A673 (cell line): ENCODE measurements at regions of chr3 and their contacts with region 1.

Region 1: GRCh38 chr3:171772427-171773056 is 37.7 kb downstream of the PLD1 start:
- DNase-seq: peak; percentile 80
- H3K4me3 ChIP-seq: no peak overlapping the region
- H3K27ac ChIP-seq: no peak overlapping the region
- H3K4me1 ChIP-seq: peaks cover 23% of the 10 kb centered on the region
- H3K27me3 ChIP-seq: no peaks in the 10 kb centered on the region
- CTCF ChIP-seq: peak; percentile 80

Region 2: GRCh38 chr3:171187706-171188290 is 584.7 kb before region 1 on chr3:
- CTCF ChIA-PET with region 1: no interaction called
- POLR2A ChIA-PET with region 1: no interaction called
- intact Hi-C with region 1: loop called (anchors 5 kb)
- DNase-seq: peak; percentile 50
- H3K4me3 ChIP-seq: no peak overlapping the region
- H3K27ac ChIP-seq: no peak overlapping the region
- H3K4me1 ChIP-seq: no peaks in the 10 kb centered on the region
- H3K27me3 ChIP-seq: no peaks in the 10 kb centered on the region
- CTCF ChIP-seq: peak; percentile 69

Region 3: GRCh38 chr3:171347301-171348039 is 425.1 kb before region 1 on chr3:
- CTCF ChIA-PET with region 1: no interaction called
- POLR2A ChIA-PET with region 1: no interaction called
- intact Hi-C with region 1: no loop called
- DNase-seq: peak; percentile 68
- H3K4me3 ChIP-seq: no peak overlapping the region
- H3K27ac ChIP-seq: peak overlapping the region; percentile 82
- H3K4me1 ChIP-seq: peaks cover 32% of the 10 kb centered on the region
- H3K27me3 ChIP-seq: no peaks in the 10 kb centered on the region
- CTCF ChIP-seq: no peak

Region 4: GRCh38 chr3:171646357-171647133 is 126.0 kb before region 1 on chr3:
- CTCF ChIA-PET with region 1: interaction called, 3 read pairs
- POLR2A ChIA-PET with region 1: no interaction called
- intact Hi-C with region 1: loop called (anchors 2 kb)
- DNase-seq: peak; percentile 61
- H3K4me3 ChIP-seq: no peak overlapping the region
- H3K27ac ChIP-seq: no peak overlapping the region
- H3K4me1 ChIP-seq: no peaks in the 10 kb centered on the region
- H3K27me3 ChIP-seq: no peaks in the 10 kb centered on the region
- CTCF ChIP-seq: peak; percentile 61

Region 5: GRCh38 chr3:171811295-171811912 is 38.9 kb after region 1 on chr3:
- CTCF ChIA-PET with region 1: interaction called, 3 read pairs
- POLR2A ChIA-PET with region 1: interaction called, 10 read pairs
- intact Hi-C with region 1: no loop called
- DNase-seq: peak; percentile 91
- H3K4me3 ChIP-seq: no peak overlapping the region
- H3K27ac ChIP-seq: peak overlapping the region; percentile 81
- H3K4me1 ChIP-seq: peaks cover 24% of the 10 kb centered on the region
- H3K27me3 ChIP-seq: no peaks in the 10 kb centered on the region
- CTCF ChIP-seq: no peak